Left ventricle myocardium inferior (tissue), 1 donor: ENCODE measurements at regions of chr6 and their contacts with region 1.

Region 1: DNA sequence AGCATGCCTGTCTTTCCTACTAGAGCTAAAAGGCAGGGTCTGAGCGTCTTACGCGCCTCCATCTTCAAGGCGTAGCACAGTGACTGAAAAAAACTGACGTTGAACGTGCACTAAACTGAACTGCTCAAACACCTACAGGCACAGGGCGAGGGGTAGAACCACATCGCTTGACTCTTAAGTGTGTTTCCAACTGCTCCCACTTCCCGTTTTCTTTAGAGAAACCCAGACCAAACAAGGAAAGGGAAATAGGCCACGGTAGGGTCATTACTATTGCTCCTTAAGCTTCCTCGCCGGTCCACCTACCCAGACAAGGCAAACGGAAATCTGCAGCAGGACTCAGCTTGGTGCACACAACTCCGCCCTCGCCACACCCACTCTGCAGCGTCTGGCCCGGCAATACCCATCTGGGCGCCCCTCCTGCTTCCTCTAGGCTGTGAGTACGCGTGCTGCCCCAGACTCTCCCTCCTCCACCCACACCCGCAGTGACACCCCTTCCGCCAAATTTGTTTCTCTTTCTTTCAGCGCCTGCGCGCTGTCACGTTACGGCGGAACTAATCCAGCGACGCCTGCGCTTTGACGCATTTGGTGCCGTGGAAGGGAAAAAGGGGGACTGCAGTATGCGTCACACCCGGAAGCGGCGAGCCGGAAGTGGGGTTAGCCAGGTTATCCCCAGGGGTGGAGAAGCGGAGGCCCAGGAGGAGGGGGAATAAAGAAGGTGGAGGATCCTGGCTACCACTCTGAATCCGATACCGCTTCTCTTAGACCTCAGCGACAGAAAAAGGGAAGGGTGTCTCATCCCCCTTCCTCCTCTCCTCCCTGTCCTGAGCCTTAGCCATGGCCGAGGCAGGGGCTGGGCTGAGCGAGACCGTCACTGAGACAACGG is at the start of gene PPP1R11:
- DNase-seq: peak; percentile 98
- H3K4me3 ChIP-seq: peak within 1 kb of the TSS; percentile 87
- H3K27ac ChIP-seq: peak within 1 kb of the TSS; percentile 94
- H3K4me1 ChIP-seq: peaks cover 50% of the 10 kb centered on the region
- H3K27me3 ChIP-seq: peaks cover 12% of the 10 kb centered on the region
- CTCF ChIP-seq: no peak
- total RNA-seq, gene PPP1R11: 45.3 TPM

Region 2: GRCh38 chr6:30102970-30103874 is 36.4 kb after region 1 on chr6:
- intact Hi-C with region 1: loop called (anchors 2 kb)
- DNase-seq: peak; percentile 85
- H3K4me3 ChIP-seq: peak overlapping the region; percentile 65
- H3K27ac ChIP-seq: peak overlapping the region; percentile 76
- H3K4me1 ChIP-seq: peaks cover 36% of the 10 kb centered on the region
- H3K27me3 ChIP-seq: peaks cover 69% of the 10 kb centered on the region
- CTCF ChIP-seq: peak; percentile 92